ENCODE measurements at regions of chr2 and their contacts with region 1.

Region 1: DNA sequence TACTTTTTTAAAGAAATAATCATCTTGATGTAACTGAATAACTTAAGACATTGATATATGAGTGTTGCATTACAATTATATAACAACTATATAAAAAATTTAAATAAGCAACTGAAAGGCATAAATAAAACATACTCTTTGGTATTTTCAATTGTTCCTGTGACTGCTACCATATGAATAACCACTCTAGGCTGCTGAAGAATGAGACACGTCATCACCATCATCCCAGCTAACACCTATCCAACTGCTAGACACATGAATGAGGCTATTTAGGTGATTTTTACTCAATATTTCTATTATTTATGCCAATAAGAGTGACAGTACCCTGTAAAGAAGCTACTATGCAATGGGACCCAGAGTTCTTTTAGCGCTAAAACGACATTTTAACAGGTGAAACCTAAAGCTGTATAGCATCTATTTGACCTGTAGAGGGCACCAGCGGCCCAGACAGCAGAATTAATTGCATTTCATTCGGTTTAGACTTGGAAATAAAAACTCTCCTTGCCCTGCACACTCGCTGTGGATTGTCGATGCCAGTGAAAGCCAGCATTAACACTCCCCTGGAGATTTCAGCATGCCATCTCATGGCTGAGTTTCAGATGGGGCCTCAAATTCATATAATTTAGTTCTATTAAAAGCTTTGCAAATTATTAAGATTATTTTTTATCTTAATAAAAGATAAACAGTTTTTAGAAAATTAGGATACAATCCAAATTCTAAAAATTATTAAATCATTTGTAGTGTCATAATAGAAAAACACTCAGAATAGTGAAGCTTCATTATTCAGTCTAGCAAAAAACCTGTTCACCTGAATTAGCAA is 89.4 kb upstream of the MAP2 start:
- DNase-seq: peak; percentile 64 to 84 (median 77)
- H3K4me3 ChIP-seq: no peak overlapping the region
- H3K27ac ChIP-seq: no peak overlapping the region
- H3K4me1 ChIP-seq: no peaks in the 10 kb centered on the region
- H3K27me3 ChIP-seq: peaks cover 2 to 9% (median 7%) of the 10 kb centered on the region in 5 experiments

Region 2: DNA sequence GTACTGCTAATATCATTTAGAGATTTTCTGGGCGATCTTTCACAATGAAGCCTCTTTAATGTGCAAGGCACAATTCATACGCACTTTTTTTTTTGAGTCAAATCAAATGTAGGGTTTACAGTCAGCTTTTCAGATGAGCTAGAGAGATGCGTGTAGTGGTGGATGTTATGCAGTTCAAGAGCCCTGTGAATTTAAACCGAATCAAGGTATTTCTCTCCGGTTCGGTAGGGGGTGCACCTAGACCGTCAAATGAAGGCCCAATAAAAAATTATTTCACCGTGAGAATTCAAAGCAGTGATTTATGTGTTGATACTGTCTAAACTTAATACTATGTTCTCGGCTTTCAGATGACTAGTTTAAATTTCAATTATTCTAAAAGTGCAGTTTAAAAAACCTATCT is 926.7 kb before region 1 on chr2:
- CTCF ChIA-PET with region 1: interaction called, 10 read pairs
- POLR2A ChIA-PET with region 1: no interaction called
- DNase-seq: peak; percentile 54 to 75 (median 69)
- H3K4me3 ChIP-seq: no peak overlapping the region
- H3K27ac ChIP-seq: no peak overlapping the region
- H3K4me1 ChIP-seq: peaks cover 0 to 14% (median 9%) of the 10 kb centered on the region in 4 experiments
- H3K27me3 ChIP-seq: peaks cover 14 to 52% (median 24%) of the 10 kb centered on the region in 5 experiments

Region 3: GRCh38 chr2:208854717-208855116 is 479.7 kb before region 1 on chr2:
- CTCF ChIA-PET with region 1: no interaction called
- POLR2A ChIA-PET with region 1: no interaction called
- DNase-seq: no peak
- H3K4me3 ChIP-seq: no peak overlapping the region
- H3K27ac ChIP-seq: no peak overlapping the region
- H3K4me1 ChIP-seq: no peaks in the 10 kb centered on the region
- H3K27me3 ChIP-seq: no peaks in the 10 kb centered on the region

Region 4: DNA sequence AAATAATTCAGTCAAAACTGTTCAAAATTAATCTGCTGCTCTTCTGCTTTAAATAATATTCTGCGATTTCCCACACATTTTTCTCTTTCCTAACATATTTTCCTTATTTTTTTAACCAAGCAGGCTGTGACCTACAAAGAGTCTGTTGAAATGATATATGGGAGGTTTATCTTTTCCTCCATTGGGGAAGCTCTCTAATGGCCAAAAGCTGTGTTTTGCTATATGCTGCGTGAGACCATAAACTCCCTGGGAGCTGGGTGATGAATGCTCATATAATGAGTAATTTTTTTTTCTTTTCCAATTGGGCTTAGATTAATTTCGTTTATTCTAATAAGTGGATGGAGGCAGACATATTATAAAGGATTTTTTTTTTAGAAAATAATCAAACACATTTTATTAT is 17.2 kb after region 1 on chr2:
- CTCF ChIA-PET with region 1: interaction called, 12 read pairs
- POLR2A ChIA-PET with region 1: no interaction called
- DNase-seq: no peak
- H3K4me3 ChIP-seq: no peak overlapping the region
- H3K27ac ChIP-seq: no peak overlapping the region
- H3K4me1 ChIP-seq: no peaks in the 10 kb centered on the region
- H3K27me3 ChIP-seq: peaks cover 3 to 23% (median 7%) of the 10 kb centered on the region in 5 experiments

Region 5: DNA sequence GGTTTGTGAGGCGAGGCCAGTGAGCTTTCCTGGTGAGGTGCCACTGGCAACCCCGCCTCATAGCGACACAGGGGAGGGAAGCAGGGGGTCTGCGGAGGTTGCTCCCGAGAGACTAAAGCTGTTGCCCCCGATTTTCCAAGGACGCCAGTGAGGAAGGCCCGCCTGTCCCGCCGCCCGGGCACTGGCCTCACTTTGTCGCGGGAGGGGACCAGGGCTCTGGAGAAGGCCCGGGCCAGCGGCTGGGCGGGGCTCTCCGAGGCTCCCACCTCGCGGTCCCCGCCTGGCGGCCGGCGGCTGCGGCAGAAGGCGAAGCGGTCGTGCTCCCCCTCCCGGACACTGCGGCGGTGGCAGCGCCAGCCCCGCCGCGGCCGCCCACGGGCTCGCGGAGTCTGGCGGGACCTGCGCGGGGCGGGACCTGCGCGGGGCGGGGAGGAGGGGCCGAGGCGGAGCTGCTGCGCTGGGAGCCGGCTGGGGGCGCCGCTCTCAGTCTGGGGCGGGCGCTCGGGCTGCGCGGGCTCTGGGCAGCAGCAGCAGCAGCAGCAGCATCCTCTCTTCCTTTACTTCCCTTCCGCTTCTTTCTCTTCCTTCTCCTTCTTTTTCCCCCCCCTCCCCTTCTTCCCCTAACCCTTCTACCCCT is 89.3 kb after region 1 on chr2 and contains the start of gene MAP2:
- CTCF ChIA-PET with region 1: interaction called, 64 read pairs
- POLR2A ChIA-PET with region 1: no interaction called
- DNase-seq: peak; percentile 81 to 88 (median 87)
- H3K4me3 ChIP-seq: peak within 1 kb of the TSS in 6 of 7 experiments; percentile 46 to 74 (median 64)
- H3K27ac ChIP-seq: no peak within 1 kb of the TSS
- H3K4me1 ChIP-seq: peaks cover 6 to 18% (median 14%) of the 10 kb centered on the region in 4 experiments
- H3K27me3 ChIP-seq: peaks cover 0 to 42% (median 19%) of the 10 kb centered on the region in 5 experiments

Region 6: DNA sequence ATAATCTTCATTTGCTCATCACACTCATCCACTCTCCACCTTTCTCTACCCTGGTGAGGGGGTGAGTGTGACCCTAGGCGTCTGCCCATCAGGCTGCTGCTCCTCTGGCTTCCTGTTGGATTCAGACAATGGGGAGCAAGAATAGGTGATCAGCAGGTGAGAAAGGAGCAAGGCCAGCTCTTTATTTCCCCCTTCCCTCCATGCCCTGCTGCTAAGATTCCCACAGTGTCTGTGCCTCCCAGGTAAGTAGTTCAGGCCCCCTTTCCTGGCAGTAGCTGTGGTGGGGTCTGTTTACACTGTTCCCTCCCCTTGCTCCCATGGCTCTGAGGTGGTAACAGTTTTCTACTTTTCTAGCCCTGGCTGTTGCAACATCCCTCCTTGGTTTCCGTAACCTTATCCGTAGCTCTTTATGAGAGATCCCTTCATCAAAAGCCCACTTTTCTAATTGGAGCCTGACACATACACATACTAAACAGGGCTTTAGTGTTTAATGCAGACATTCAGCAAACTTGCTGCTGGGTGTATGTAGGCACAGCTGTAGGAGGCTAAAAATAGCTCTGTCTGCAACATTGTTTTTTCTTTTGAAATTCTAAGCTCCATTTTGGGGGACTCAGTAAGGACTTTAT is 116.9 kb after region 1 on chr2:
- CTCF ChIA-PET with region 1: no interaction called
- POLR2A ChIA-PET with region 1: no interaction called
- DNase-seq: no peak
- H3K4me3 ChIP-seq: no peak overlapping the region
- H3K27ac ChIP-seq: no peak overlapping the region
- H3K4me1 ChIP-seq: no peaks in the 10 kb centered on the region
- H3K27me3 ChIP-seq: peaks cover 0 to 2% (median 0%) of the 10 kb centered on the region in 5 experiments

Region 7: DNA sequence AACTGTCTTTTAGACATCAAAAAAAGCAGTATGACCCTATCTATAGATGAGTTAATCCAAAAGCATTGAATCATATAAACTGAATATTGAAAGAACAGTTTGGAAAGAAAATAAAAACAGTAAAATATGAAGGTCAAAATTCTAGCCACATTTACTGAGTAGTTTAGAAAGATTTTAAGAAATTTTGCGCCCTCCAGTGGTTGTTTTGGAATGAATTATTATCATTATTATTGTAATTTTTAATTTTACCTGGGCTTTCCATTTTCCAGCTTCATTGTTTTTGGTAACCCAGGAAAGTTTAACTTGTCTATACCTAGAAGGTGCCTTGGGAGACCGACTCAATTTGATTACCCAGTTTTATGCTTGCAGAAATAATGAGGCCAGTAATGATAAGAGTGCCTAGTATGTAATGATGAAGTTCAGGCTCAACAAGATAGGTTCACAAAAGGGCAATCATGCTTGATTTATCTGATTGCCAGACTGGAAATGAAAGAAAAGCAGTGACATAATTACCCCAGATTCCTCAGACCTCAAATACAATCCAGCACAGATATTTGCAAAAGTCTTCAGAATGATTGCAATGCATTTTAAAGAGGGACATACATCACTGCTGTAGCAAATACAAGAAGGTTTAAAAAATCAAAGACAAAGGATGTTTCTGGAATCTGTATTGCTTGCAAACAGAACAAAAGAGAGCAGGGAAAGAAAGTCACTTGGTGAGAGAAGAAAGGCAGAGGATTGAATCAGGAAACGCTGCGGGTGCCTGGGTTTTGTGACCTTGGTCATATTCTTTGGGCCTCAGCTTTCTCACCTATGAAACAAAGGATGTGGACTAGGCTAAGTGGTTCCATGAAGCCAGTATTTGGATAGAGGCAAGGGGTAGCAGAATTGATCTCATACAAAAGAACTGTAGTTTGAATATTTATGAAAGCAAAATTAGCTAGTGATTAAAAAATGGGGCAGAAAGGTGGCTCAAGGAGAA is 243.3 kb after region 1 on chr2:
- CTCF ChIA-PET with region 1: interaction called, 33 read pairs
- POLR2A ChIA-PET with region 1: no interaction called
- DNase-seq: peak; percentile 15 to 37 (median 28)
- H3K4me3 ChIP-seq: no peak overlapping the region
- H3K27ac ChIP-seq: no peak overlapping the region
- H3K4me1 ChIP-seq: peaks cover 0 to 5% (median 2%) of the 10 kb centered on the region in 4 experiments
- H3K27me3 ChIP-seq: peaks cover 0 to 4% (median 0%) of the 10 kb centered on the region in 5 experiments